ENCODE measurements at regions of chr15 and their contacts with region 1.

Region 1: GRCh38 chr15:80567721-80568157 is 127.4 kb upstream of the ABHD17C start:
- DNase-seq: no peak

Region 2: DNA sequence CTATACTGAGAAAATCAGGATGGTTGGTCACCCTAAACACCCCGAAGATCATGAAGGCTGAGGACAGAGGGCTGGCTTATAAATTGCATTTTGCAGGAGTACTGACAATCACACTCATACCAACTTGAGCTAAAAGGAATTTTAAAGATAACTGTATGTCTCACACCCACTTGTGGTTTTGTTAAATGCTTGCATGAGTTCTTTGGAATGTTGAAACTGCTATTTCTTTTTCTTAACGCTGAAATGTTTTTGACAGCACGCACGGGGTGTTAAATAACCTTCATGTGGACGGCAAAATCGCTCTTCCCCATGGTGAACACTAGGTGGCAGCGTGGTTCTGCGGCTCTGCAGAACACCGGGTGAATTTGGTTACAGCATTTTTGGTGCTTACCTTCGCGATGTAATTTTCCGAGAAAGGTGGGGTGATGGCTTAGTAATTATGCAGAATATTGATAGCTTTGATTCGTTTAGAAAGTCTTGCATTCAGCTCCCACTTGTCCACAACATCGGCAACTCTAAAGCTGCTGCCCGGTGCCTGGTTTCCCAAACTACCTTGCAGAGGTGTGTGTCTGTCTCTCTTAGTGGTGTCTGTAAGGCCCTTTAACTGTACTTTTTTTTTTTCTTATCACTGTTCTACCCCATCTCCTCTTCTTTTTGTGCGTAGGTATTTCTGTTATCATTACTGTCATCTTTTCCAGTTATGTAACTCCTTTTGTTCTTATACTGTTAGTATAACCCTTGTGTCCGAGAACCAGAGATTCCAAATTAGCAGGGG is 111.9 kb before region 1 on chr15:
- intact Hi-C with region 1: loop called (anchors 5 kb)
- DNase-seq: no peak

Region 3: GRCh38 chr15:80970018-80970658 is 402.4 kb after region 1 on chr15:
- intact Hi-C with region 1: loop called (anchors 5 kb)
- DNase-seq: no peak